Activated B cell treated with CpG ODN at 0.5 μM for 24 hours (primary cell): ENCODE measurements at regions of chr20 and their contacts with region 1.

Region 1: DNA sequence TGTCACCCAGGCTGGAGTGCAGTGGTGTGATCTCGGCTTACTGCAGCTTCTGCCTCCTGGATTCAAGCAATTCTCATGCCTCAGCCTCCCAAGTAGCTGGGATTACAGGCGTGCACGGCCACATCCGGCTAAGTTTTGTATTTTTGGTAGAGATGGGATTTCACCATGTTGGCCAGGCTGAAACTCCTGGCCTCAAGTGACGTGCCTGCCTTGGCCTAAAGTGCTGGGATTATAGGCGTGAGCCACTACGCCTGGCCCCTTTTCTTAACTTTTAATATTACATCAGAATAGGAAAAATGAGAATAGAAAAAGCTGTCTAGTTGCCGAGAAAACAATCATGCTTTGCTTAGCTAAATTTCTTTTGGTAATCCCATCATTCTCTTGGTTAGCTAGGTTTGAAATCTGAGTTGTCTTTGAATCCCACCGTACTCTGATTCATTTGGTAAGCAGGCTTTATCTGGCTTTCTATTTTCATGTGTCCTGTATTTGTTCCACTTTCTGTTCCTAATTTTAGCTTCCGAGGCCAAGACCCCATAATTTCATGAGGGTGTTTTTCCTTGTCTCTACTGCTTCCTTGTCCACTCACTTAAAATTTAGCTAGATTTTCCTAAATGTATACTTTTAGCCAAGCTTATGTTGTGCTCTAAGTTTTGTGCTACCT is 83.5 kb downstream of the NCOA3 start:
- DNase-seq: no peak
- ATAC-seq: peak; percentile 27
- H3K4me3 Mint-ChIP-seq: no peak overlapping the region
- H3K27ac Mint-ChIP-seq: peak overlapping the region; percentile 30
- H3K4me1 Mint-ChIP-seq: peaks cover 61% of the 10 kb centered on the region
- H3K27me3 Mint-ChIP-seq: no peaks in the 10 kb centered on the region
- CTCF ChIP-seq: no peak

Region 2: DNA sequence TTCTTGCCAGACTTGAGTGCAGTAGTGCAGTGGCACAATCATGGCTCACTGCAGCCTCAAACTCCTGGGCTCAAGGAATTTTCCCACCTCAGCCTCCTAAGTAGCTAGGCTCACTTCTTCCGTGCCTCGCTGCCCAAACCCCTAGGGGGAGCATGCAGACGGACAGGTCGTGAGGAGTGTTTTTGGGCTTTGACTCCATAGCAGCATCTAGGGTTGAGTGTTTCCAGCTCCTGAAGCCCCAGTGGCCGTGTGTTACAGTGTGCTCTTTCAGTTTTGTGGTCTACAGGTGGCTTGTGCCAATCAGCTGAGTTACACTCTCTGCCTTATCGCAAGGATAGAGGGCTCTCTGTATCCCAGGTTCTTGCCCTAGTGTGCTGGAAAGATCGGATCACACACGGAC is 50.1 kb before region 1 on chr20:
- CTCF ChIA-PET with region 1: no interaction called
- POLR2A ChIA-PET with region 1: no interaction called
- intact Hi-C with region 1: no loop called
- DNase-seq: no peak
- ATAC-seq: peak; percentile 35
- H3K4me3 Mint-ChIP-seq: no peak overlapping the region
- H3K27ac Mint-ChIP-seq: no peak overlapping the region
- H3K4me1 Mint-ChIP-seq: peaks cover 74% of the 10 kb centered on the region
- H3K27me3 Mint-ChIP-seq: no peaks in the 10 kb centered on the region
- CTCF ChIP-seq: no peak

Region 3: GRCh38 chr20:47610247-47610944 is 25.2 kb after region 1 on chr20:
- CTCF ChIA-PET with region 1: no interaction called
- POLR2A ChIA-PET with region 1: no interaction called
- intact Hi-C with region 1: loop called (anchors 2 kb)
- DNase-seq: no peak
- ATAC-seq: peak; percentile 91
- H3K4me3 Mint-ChIP-seq: peak overlapping the region; percentile 65
- H3K27ac Mint-ChIP-seq: peak overlapping the region; percentile 88
- H3K4me1 Mint-ChIP-seq: peaks cover 78% of the 10 kb centered on the region
- H3K27me3 Mint-ChIP-seq: no peaks in the 10 kb centered on the region
- CTCF ChIP-seq: no peak

Region 4: DNA sequence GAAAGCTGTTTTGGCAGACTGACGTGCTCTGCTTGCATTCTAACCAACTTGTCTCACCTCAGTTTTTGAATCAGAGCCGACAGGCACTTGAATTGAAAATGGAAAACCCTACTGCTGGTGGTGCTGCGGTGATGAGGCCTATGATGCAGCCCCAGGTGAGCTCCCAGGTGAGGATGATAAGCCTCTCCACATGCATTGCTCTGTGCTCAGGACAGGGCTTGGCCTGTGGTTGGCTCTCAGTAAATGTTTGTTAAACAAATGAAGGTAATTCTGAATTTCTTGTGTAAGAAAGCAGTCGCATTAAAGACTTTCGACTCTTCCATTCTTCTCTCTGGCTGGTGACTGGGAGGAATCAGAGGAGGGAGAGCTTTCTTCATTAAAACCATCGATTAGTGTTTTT is 63.7 kb after region 1 on chr20:
- CTCF ChIA-PET with region 1: no interaction called
- POLR2A ChIA-PET with region 1: no interaction called
- intact Hi-C with region 1: no loop called
- DNase-seq: no peak
- ATAC-seq: no peak
- H3K4me3 Mint-ChIP-seq: no peak overlapping the region
- H3K27ac Mint-ChIP-seq: no peak overlapping the region
- H3K4me1 Mint-ChIP-seq: no peaks in the 10 kb centered on the region
- H3K27me3 Mint-ChIP-seq: no peaks in the 10 kb centered on the region
- CTCF ChIP-seq: no peak

Region 5: DNA sequence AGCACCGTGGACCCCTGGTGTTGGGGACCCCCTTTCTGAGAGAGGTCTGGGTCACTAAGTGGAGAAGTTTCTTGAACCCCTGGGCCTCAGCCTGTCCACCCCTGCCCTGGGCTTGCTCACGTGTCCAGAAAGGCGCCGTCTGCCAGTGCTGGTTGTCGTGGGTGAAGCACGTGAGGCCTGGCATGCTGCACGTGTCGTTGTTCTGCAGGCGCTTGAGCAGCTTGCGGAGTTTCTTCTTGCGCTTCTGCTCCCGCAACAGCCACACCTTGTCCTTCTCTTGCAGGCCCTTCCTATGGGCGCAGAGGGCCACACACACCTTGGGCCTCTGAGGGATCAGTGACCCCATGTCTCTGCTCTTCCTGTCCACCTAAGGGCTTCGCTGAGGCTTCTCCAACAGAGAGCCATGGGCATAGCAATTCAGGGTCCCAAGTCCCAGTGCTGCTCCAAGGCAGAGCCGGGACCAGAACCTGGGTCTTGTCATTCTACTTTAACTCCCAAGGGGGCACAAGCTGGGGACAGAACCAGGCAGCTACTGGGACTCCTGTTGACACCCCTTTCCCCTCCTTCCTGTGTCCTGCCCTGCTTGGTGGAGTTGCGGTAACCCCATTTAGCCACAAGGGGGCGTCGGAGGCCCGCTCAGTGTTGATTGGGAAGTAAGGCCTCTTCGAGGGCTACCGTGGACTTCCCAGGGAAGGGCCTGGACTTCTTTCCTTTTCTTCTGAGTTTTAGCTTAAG is 78.3 kb after region 1 on chr20:
- CTCF ChIA-PET with region 1: no interaction called
- POLR2A ChIA-PET with region 1: no interaction called
- intact Hi-C with region 1: no loop called
- DNase-seq: peak; percentile 69
- ATAC-seq: peak; percentile 88
- H3K4me3 Mint-ChIP-seq: no peak overlapping the region
- H3K27ac Mint-ChIP-seq: no peak overlapping the region
- H3K4me1 Mint-ChIP-seq: peaks cover 4% of the 10 kb centered on the region
- H3K27me3 Mint-ChIP-seq: no peaks in the 10 kb centered on the region
- CTCF ChIP-seq: peak; percentile 75